ENCODE measurements at regions of chr18 and their contacts with region 1.

Region 1: DNA sequence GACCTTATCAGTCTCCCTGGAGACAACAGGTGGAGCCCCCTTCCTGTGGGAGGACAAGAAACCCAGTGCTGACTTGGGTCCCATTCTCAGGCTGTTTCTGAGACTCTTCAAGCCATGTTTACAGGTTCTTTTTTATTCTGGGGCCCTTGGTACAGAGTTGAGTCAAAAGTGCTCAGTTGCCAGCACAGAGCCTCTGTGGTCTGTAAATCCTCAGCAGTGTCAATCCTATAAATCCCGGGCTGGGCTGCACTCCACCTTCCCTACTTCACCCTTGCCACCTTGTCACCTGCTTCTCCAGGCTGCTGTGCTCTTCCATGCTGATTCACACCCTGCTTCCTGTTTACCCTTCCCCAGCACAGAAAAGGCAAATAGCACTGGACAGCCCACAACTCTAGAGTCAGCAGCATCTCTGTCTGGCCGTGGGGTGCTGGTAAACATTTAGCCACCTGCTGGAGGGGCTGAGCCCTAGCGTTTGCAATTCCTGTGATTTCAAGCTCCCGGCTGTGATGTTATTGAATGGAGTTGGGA is 74.7 kb downstream of the TNFRSF11A start:
- DNase-seq: peak; percentile 37
- ATAC-seq: peak; percentile 91
- H3K4me3 Mint-ChIP-seq: no peak overlapping the region
- H3K27ac Mint-ChIP-seq: no peak overlapping the region
- H3K4me1 Mint-ChIP-seq: peaks cover 22% of the 10 kb centered on the region
- H3K27me3 Mint-ChIP-seq: no peaks in the 10 kb centered on the region
- CTCF ChIP-seq: no peak

Region 2: GRCh38 chr18:62324917-62325805 is 74.7 kb before region 1 on chr18 and contains the start of gene TNFRSF11A:
- CTCF ChIA-PET with region 1: interaction called, 10 read pairs
- POLR2A ChIA-PET with region 1: no interaction called
- DNase-seq: peak; percentile 75
- ATAC-seq: peak; percentile 78
- H3K4me3 Mint-ChIP-seq: peak within 1 kb of the TSS; percentile 80
- H3K27ac Mint-ChIP-seq: no peak within 1 kb of the TSS
- H3K4me1 Mint-ChIP-seq: peaks cover 61% of the 10 kb centered on the region
- H3K27me3 Mint-ChIP-seq: peaks cover 55% of the 10 kb centered on the region
- CTCF ChIP-seq: peak; percentile 43; the same call in 1 of the 2 replicates
- total RNA-seq, gene TNFRSF11A: 3.9 to 4.9 TPM (median 4.7 TPM) in 3 replicates

Measured in WTC11 (cell line).